A673 (cell line): ENCODE measurements at regions of chrX and their contacts with region 1.

Region 1: DNA sequence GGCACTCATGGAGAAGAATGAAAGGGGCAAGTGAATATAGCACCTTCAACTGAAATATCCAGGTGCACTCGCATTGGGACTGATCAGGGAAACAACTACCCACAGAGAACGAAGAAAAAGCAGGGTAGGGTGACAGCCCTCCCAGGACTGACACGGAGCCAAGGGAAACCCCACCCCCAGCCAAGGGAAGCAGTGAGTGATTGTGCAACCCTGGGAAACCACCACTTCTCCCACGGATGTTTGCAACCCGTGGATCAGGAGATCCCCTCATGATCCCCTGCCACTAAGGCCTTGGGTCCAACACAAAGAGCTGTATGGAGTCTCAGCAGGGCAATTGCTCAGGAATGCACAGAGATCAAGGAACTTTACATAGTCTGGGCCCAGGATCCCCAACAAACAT is 158.5 kb upstream of the HCCS start:
- DNase-seq: no peak
- H3K4me3 ChIP-seq: no peak overlapping the region
- H3K27ac ChIP-seq: no peak overlapping the region
- H3K4me1 ChIP-seq: no peaks in the 10 kb centered on the region
- H3K27me3 ChIP-seq: no peaks in the 10 kb centered on the region
- CTCF ChIP-seq: no peak

Region 2: GRCh38 chrX:10387011-10387410 is 565.6 kb before region 1 on chrX:
- CTCF ChIA-PET with region 1: no interaction called
- POLR2A ChIA-PET with region 1: no interaction called
- intact Hi-C with region 1: no loop called
- DNase-seq: no peak
- H3K4me3 ChIP-seq: no peak overlapping the region
- H3K27ac ChIP-seq: no peak overlapping the region
- H3K4me1 ChIP-seq: no peaks in the 10 kb centered on the region
- H3K27me3 ChIP-seq: peaks cover 10% of the 10 kb centered on the region
- CTCF ChIP-seq: no peak

Region 3: DNA sequence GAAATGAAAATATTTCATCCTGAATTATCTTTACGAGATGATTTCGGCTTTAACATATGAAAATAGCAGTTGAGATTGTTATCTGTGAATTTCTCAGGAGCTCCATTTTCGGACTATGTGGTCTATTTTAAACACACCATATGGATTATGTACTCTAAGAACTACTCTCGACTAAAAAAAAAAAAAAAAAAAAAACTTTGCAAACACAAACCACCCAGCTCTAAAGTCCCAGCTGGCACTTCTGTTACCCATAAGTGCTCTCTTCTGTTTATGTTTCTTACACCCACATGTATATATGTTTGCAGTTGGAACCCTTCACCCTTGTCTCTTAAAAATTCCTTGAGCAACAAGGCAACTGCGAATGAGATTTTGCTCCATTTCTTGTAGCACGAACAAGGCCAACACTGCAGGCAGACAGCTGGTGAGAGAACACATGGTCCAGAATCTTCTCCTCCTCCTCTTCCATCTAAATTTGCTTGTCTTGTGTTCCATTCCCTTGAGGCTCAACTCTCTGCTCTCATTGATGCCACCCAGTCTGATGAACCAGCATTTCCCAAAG is 14.2 kb before region 1 on chrX:
- CTCF ChIA-PET with region 1: no interaction called
- POLR2A ChIA-PET with region 1: no interaction called
- intact Hi-C with region 1: loop called (anchors 1 kb)
- DNase-seq: no peak
- H3K4me3 ChIP-seq: no peak overlapping the region
- H3K27ac ChIP-seq: no peak overlapping the region
- H3K4me1 ChIP-seq: no peaks in the 10 kb centered on the region
- H3K27me3 ChIP-seq: no peaks in the 10 kb centered on the region
- CTCF ChIP-seq: no peak

Region 4: DNA sequence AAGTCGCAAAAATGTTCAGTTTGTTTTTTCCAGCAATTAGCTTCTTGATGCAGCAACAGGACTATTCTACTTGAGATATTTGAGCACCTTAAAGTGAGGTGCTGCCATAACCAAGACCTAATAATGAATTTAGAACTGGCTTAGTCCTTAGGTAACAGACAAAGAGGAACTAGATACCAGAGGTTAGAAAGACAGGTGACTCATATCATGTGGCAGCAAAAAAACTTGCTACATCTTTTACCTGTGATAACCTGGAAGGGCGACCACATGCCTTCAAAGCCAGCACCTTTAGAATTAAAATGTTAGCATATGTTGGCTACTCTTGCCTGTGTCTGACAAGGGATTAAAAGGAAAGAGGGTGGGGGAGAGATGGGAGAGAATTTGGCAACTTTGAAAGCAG is 622.7 kb after region 1 on chrX:
- CTCF ChIA-PET with region 1: no interaction called
- POLR2A ChIA-PET with region 1: no interaction called
- intact Hi-C with region 1: no loop called
- DNase-seq: no peak
- H3K4me3 ChIP-seq: no peak overlapping the region
- H3K27ac ChIP-seq: no peak overlapping the region
- H3K4me1 ChIP-seq: no peaks in the 10 kb centered on the region
- H3K27me3 ChIP-seq: no peaks in the 10 kb centered on the region
- CTCF ChIP-seq: no peak